Heart right ventricle (tissue), 16 donors: ENCODE measurements at regions of chr7 and their contacts with region 1.

Region 1: DNA sequence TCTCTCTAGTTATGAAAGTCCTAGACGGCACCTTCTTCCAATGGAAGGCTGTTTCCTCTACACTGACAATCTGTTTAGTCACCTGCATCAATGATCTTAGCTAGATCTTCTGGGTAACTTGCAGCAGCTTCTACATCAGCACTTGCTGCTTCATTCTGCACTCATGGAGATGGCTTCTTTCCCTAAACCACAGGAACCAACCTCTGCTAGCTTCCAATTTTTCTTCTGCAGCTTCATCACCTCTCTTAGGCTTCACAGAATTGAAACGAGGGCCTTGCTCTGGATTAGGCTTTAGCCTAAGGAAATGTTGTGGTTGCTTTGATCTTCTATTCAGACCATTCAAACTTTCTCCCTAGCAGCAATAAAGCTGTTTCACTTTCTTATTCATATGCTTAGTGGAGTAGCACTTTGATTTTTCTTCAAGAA is 24.6 kb downstream of the NAMPT start:
- DNase-seq: no peak
- ATAC-seq: no peak
- H3K4me3 ChIP-seq: no peak overlapping the region
- H3K27ac ChIP-seq: peak overlapping the region in 1 of 10 donors; percentile 27
- H3K4me1 ChIP-seq: peaks cover 0 to 22% (median 0%) of the 10 kb centered on the region in 9 donors
- H3K27me3 ChIP-seq: no peaks in the 10 kb centered on the region
- CTCF ChIP-seq: no peak

Region 2: GRCh38 chr7:106216517-106216922 is 43.6 kb before region 1 on chr7:
- intact Hi-C with region 1: loop called in 1 of 10 experiments (anchors 10 kb)
- DNase-seq: peak in 1 of 2 donors; percentile 51
- ATAC-seq: peak; percentile 66 to 93 (median 92)
- H3K4me3 ChIP-seq: peak overlapping the region in 5 of 10 donors; percentile 1 to 34 (median 24)
- H3K27ac ChIP-seq: peak overlapping the region; percentile 72 to 93 (median 84)
- H3K4me1 ChIP-seq: peaks cover 18 to 39% (median 36%) of the 10 kb centered on the region in 9 donors
- H3K27me3 ChIP-seq: no peaks in the 10 kb centered on the region
- CTCF ChIP-seq: no peak

Region 3: DNA sequence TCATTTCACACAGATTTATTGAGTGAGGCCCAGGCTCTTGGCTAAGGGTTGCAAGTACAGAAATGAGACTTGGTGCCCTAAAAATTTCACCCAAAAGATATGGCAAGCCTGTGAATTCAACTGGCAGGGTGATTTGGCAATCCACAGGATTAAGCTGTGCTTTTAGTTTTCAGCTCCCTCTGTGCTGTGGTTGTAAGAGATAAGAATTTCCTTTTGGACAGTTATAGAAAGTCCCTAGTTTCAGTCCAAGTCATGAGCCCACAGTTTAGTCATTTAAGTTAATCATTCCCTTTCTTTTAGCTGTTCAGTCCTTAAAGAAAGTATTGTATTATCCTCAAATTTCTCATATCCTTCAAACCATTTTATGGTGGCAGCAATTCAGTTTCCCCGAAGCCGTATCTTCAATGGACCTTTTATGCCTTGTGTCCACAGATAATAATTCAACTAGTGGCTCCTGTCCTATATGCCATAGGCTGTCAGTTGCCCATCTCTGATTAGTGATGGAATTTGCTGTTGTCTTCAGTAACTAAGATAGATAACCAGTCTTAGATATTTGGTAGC is 98.0 kb after region 1 on chr7:
- intact Hi-C with region 1: no loop called
- DNase-seq: no peak
- ATAC-seq: peak in 2 of 8 donors; percentile 63 to 73
- H3K4me3 ChIP-seq: no peak overlapping the region
- H3K27ac ChIP-seq: peak overlapping the region in 1 of 10 donors; percentile 73
- H3K4me1 ChIP-seq: peaks cover 0 to 16% (median 0%) of the 10 kb centered on the region in 9 donors
- H3K27me3 ChIP-seq: no peaks in the 10 kb centered on the region
- CTCF ChIP-seq: no peak

Region 4: DNA sequence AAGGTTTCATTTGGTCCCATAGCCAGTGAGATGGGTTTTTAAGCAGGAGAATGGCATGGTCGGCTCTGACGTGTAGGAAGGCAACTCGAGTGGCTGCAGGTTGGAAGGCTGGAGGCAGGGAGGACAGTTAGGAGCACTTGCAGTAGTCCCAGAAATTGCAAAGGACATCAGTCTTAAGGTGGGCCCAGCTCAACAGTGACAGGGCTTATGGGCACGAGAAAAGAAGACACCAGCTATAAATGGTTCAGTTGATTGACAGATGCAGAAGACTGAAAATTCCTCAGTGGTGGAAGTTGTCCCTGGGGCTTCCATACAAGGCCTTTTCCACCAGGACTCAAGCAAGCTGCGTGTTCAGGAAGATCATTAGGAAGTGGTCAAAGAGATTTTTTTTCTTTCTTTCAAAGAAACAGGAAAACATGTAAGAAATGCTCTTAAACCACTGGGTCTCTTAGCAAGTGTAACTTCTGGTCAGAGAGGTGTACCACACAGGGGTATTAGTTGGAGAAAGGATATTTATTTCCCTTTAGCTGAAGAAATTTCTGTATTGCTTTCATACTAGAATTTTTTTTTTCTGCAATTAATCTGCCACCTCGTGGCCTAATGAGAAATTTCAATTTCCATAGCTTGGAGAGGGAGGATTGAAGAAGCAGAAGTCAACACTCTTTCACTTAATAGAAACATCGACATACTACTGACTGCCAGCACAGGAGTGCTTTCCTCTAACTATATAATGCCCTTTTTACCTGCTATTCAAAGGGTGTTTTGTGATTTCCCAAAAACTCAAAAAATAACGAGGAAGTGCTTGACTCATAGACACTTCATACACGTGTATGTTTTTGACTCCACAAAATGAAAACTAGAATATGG is 202.1 kb after region 1 on chr7:
- intact Hi-C with region 1: loop called in 1 of 10 experiments (anchors 10 kb)
- DNase-seq: no peak
- ATAC-seq: peak in 4 of 8 donors; percentile 30 to 42 (median 38)
- H3K4me3 ChIP-seq: no peak overlapping the region
- H3K27ac ChIP-seq: peak overlapping the region in 1 of 10 donors; percentile 58
- H3K4me1 ChIP-seq: peaks cover 0 to 20% (median 3%) of the 10 kb centered on the region in 9 donors
- H3K27me3 ChIP-seq: no peaks in the 10 kb centered on the region
- CTCF ChIP-seq: peak; percentile 34 to 76 (median 65)